ENCODE measurements at regions of chr4 and their contacts with region 1.

Region 1: DNA sequence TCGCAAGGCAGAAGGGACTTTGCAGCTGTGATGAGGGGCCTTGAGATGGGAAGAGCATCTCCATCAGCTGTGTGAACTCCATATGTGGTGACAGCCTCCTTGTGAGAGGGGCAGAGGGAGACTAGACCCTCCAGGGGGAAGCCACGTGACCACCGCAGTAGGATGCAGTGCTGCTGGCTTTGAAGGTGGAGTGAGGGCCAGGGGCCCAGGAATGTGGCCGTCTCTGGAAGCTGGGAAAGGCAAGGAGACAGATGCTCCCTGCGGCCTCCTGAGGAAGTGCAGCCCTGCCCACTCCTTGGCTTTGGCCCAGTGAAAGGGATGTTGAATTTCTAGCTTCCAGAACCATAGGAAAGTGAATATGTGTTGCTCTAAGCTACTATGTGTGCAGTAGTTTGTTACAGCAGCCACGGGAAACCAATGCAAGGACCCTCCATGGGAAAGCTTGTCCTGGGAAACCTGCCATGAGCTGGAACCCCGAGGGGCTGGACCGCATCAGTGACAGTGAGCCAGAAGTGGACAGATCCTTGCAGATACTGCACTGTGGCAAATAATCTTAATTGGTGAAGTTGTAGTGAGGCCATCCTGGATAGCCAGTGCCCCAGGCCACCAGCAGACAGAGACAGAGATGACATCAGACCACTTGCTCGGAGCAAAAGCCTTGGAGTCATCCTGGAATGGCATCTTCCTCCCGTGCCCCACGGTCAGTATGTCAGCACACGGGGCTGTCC is 35.4 kb upstream of the SORCS2 start:
- DNase-seq: peak; percentile 72

Region 2: DNA sequence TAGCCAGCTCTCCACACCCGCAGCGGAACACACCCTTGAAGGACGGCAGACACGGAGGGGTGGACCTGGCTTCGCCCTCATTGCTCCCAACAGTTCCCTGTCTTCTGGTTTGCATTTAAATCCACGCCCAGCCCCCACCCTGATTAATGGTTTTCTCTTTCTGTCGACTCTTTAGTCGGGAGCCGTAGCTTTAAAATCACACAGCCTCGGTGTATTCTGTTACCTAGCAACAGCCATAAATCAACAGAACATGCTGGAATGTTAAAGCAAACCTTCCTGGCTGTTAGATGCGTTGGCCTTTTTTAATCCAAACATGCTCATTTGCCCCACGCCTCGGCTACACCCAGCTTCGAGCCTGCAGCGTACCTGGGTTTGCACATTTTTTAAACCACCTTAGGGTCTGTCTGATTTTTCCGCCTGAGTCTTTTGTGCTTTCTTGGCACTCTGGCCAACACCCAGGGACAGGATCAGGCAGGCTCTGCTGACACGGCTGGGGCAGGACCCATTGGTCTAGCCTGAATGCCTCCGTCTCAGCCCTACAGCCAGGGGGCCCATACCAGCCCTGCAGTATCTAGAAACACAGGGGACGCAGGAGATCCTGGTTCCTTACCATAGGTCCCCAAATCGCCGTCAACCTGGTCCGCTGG is 663.1 kb before region 1 on chr4:
- intact Hi-C with region 1: no loop called
- DNase-seq: peak; percentile 36

Region 3: GRCh38 chr4:6942238-6942800 is 214.6 kb before region 1 on chr4:
- intact Hi-C with region 1: no loop called
- DNase-seq: no peak

Region 4: DNA sequence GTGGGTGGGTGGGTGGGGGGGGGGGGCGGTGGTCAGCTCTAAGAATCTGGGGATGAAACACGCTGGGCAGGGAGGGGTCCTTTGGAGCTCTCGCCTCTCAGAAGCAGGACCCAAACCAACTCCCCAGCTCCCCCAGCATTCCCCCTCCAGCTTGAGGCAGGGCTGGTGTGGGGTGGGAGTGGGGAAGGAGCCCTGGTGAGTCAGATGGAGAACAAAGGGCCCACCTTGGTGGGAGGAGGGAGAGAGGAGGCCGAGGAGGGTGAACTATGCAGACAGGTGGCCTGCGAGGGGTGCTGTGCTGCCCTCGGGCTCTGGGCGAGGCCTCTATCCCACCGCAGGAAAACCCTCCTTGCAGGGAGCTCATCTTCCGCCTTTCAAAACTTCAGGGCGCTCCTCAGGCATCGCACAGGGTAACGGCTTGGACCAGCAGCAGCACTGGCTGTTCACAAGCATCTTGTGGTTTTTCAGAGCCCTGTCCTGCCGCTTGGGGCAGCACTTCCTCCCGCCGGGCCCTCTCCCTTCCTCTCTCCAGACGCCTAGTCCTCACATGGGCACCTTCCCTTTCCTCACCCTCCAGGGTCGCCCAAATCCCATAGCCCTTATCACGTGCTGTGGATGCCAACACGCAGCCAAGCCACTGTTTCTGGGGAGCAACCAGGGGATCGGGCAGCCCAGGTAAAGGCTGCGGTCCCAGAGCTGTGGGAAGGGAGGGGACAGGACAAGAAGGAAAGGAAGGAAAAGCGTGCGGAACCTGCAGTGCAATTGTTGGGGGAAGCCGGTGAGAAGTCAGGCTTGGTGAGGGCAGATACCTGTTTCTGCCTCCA is 55.0 kb before region 1 on chr4:
- intact Hi-C with region 1: loop called (anchors 5 kb)
- DNase-seq: peak; percentile 87